ENCODE measurements at regions of chr11 and their contacts with region 1.

Region 1: DNA sequence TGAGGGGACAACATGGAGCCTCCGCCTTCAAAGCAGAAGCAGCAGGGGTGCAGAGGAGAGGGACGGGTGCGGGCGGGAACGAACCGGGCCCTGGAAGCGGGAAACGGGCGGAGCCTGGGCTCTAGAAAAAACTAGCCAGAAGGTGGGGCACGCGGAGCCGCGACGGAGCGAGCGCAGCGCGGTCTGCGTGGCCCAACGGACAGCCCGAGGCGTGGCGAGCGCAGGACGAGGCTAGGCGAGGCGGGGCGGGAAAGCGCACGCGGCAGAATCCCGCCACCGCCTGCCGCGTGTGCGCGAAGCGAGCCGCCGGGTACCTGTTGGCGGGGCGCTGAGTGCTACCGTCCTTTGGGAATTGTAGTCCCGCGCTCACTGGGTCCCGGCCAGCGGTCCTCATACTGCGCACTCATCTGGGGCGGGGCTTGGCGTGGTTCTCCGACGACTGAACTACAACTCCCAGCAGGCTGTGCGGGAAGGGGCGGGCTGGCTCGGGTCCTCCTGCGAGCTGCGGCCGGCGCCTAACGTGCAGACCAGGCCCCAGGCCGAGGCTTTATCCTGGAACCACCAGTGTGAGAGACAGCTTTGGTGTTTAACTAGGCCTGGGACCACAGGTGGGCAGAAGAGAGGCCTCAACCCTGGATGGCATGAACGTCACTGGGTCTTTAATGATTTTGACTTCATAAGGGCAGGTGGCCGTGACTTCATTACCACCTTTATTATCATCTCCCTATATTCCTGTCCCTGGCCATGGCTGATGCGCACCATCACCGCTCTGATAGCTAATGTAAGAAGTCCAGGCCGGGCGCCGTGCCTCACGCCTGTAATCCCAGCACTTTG is at the start of gene ATL3:
- DNase-seq: peak; percentile 93
- ATAC-seq: peak; percentile 79
- H3K4me3 ChIP-seq: peak within 1 kb of the TSS; percentile 75
- H3K27ac ChIP-seq: peak within 1 kb of the TSS; percentile 82
- H3K4me1 ChIP-seq: peaks cover 13% of the 10 kb centered on the region
- H3K27me3 ChIP-seq: no peaks in the 10 kb centered on the region
- CTCF ChIP-seq: peak; percentile 33; the same call in 1 of the 2 replicates
- POLR2A ChIP-seq: no peak; the same call in 1 of the 2 replicates
- RAD21 ChIP-seq: peak; percentile 30; the same call in 1 of the 2 replicates
- total RNA-seq, gene ATL3: 131 and 132 TPM in 2 replicates

Region 2: DNA sequence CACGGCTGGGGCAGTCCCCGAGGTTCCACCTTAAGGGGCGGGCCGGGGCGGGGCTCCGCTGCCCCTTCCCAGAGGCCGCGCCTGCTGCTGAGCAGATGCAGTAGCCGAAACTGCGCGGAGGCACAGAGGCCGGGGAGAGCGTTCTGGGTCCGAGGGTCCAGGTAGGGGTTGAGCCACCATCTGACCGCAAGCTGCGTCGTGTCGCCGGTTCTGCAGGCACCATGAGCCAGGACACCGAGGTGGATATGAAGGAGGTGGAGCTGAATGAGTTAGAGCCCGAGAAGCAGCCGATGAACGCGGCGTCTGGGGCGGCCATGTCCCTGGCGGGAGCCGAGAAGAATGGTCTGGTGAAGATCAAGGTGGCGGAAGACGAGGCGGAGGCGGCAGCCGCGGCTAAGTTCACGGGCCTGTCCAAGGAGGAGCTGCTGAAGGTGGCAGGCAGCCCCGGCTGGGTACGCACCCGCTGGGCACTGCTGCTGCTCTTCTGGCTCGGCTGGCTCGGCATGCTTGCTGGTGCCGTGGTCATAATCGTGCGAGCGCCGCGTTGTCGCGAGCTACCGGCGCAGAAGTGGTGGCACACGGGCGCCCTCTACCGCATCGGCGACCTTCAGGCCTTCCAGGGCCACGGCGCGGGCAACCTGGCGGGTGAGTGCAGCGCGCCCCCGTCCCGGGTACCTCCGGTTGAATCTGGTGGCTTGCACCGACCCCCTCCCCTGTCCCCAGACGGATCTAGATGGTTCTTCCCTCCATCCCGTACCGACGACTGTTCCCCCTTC is 790.5 kb before region 1 on chr11 and contains the start of gene SLC3A2:
- CTCF ChIA-PET with region 1: no interaction called
- POLR2A ChIA-PET with region 1: no interaction called
- dilution Hi-C with region 1: no loop called
- in situ Hi-C with region 1: loop called (anchors 25 kb)
- intact Hi-C with region 1: no loop called
- DNase-seq: peak; percentile 82
- ATAC-seq: peak; percentile 85
- H3K4me3 ChIP-seq: peak within 1 kb of the TSS; percentile 92
- H3K27ac ChIP-seq: peak within 1 kb of the TSS; percentile 98
- H3K4me1 ChIP-seq: peaks cover 23% of the 10 kb centered on the region
- H3K27me3 ChIP-seq: no peaks in the 10 kb centered on the region
- CTCF ChIP-seq: peak; percentile 71
- POLR2A ChIP-seq: peak; percentile 97
- RAD21 ChIP-seq: peak; percentile 61
- total RNA-seq, gene SLC3A2: 114 and 140 TPM in 2 replicates

Region 3: GRCh38 chr11:63635762-63636465 is 35.6 kb before region 1 on chr11:
- CTCF ChIA-PET with region 1: no interaction called
- POLR2A ChIA-PET with region 1: no interaction called
- dilution Hi-C with region 1: no loop called
- in situ Hi-C with region 1: no loop called
- intact Hi-C with region 1: no loop called
- DNase-seq: peak; percentile 63
- ATAC-seq: peak; percentile 94
- H3K4me3 ChIP-seq: no peak overlapping the region
- H3K27ac ChIP-seq: no peak overlapping the region
- H3K4me1 ChIP-seq: no peaks in the 10 kb centered on the region
- H3K27me3 ChIP-seq: no peaks in the 10 kb centered on the region
- CTCF ChIP-seq: peak; percentile 84
- POLR2A ChIP-seq: 0 out of 2 replicates have a peak, but pooled peaks have one; percentile 31
- RAD21 ChIP-seq: peak; percentile 91

Region 4: DNA sequence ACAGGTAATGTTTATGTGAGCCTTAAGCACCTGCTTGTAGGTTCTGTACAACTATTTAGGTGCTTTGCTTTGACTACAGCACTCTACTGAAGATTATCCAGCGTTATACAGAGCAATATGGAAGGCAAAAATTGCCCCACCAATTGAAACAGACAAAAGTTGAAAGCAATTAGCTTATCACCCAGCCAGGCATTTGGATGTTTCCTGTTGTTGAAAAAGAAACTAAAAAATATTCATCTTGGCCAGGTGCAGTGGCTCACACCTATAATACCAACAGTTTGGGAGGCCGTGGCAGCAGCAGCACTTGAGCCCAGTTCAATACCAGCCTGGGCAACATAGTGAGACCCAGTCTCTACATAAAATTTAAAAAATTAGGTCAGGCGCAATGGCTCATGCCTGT is 18.9 kb before region 1 on chr11:
- CTCF ChIA-PET with region 1: no interaction called
- POLR2A ChIA-PET with region 1: no interaction called
- dilution Hi-C with region 1: no loop called
- in situ Hi-C with region 1: no loop called
- intact Hi-C with region 1: no loop called
- DNase-seq: no peak
- ATAC-seq: no peak
- H3K4me3 ChIP-seq: no peak overlapping the region
- H3K27ac ChIP-seq: no peak overlapping the region
- H3K4me1 ChIP-seq: no peaks in the 10 kb centered on the region
- H3K27me3 ChIP-seq: no peaks in the 10 kb centered on the region
- CTCF ChIP-seq: no peak
- POLR2A ChIP-seq: no peak
- RAD21 ChIP-seq: no peak

Measured in IMR-90 (cell line).